ENCODE measurements at regions of chr11 and their contacts with region 1.

Region 1: DNA sequence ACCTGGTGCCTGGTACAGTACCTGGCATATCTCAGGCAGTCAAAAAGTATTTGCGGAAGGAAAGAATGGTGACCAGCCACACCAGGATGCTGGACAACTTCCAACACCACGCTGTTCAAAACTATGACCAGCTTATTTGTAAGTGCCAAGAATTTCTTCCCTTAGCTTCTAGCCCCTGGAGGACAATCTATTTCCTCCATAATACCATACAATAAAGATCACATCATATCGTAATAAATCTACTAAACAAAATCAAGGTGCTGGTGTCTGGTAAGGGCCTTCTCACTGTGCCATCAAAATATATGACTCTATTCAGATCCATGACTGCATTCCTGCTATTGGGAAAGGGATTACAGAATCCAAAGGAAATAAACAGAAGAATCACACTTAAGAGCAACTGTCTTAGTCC is 51.5 kb downstream of the ALG9 start:
- DNase-seq: no peak

Region 2: GRCh38 chr11:111788051-111788450 is 31.8 kb before region 1 on chr11:
- intact Hi-C with region 1: loop called (anchors 5 kb)
- DNase-seq: peak; percentile 79

Region 3: DNA sequence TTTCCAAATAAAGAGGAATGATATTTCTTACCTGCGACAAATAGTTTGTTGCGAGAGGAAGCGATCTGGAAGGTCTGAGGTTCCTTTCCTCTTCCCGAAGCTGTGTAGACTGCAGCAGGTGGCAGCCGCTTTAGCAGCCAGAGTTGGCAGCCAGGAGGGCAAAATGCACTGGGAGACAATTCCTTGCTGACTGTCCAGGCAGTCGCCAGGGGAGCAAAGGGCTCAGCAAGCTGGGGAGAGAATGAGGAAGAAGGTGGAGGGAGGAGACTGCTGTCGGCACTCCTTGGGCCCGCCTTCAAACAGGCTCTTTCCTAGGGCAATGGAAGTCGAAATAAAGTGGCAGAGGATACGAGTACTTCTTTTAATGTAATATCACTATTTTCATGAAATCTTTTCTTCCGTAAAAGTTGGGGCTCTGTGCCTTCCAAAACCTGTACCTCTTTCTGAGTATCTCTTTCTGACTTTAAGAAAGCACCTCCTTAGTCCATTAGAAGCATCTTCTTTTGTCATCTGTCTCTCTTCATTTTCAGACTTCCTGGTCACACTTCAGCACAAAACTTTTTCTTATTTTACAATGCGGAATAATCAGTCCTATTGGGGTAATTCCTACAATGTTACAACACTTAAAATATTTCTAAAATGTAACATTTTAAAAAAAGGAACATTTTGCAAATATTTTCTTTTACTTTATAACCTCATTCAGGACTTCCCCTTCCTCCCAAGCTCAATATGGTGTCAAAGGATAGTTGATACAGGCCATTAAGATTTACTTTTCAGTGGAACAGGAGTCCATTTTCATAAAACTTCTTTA is 344.2 kb after region 1 on chr11 and contains the start of gene IL18:
- intact Hi-C with region 1: no loop called
- DNase-seq: peak; percentile 79
- total RNA-seq, gene IL18: 0.70 TPM